ENCODE measurements at regions of chr1 and their contacts with region 1.

Region 1: DNA sequence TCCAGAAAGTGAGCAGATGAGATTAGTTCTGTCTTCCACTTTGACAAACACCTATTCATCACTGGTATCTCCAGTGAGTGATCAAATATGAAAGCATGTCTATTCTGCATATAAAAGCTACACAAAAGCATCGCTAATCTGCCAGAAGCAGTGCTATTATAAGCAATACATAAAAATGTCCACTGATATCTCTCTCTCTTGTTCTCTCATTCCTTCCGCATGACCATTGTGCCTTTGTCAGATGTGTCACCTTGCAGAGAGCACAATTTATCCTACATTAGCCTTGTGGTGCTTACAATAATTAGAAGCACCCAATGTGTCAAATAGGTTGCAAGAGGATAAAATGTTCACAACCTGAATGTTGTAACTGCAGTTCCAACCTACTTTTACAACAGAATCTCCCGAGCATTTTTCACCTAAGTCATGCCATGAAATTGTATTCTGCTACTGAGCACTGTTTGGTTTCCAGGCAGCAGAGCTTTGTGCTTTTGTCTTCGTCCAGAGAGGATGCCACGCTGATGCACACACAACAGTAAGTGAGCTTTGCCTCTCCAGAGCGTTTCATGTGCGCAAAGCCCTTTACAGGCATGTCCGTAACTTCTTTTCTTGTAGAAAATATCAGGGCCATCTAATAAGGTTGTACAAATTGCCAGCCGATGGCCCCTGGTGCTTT is 198.7 kb upstream of the PLD5 start:
- DNase-seq: no peak

Region 2: DNA sequence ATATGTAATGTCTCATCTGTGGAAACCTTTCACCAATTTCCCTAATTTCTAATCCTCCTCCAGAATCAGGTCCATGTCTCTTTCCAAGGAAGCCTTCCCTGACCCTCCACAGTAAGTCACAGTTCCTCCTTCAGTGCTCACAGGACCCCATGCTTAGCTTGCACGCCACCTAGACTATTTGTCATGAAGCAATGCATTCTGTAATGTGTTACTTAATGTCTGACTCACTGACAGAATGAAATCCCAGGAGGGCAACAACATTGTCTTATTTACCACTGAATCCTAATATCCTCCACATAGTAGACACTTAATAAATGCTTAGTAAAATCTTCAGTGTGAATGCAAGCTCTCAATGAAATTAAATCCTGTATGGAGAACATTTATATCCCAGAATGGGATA is 47.2 kb after region 1 on chr1:
- intact Hi-C with region 1: loop called in 1 of 2 experiments (anchors 2 kb)
- DNase-seq: no peak